Activated CD4-positive, alpha-beta T cell treated with anti-CD3 and anti-CD28 coated beads, Interleukin-2, amount 10 ng/mL, durations not matched to agents 24 days and 14 days (primary cell): ENCODE measurements at regions of chr3 and their contacts with region 1.

Region 1: DNA sequence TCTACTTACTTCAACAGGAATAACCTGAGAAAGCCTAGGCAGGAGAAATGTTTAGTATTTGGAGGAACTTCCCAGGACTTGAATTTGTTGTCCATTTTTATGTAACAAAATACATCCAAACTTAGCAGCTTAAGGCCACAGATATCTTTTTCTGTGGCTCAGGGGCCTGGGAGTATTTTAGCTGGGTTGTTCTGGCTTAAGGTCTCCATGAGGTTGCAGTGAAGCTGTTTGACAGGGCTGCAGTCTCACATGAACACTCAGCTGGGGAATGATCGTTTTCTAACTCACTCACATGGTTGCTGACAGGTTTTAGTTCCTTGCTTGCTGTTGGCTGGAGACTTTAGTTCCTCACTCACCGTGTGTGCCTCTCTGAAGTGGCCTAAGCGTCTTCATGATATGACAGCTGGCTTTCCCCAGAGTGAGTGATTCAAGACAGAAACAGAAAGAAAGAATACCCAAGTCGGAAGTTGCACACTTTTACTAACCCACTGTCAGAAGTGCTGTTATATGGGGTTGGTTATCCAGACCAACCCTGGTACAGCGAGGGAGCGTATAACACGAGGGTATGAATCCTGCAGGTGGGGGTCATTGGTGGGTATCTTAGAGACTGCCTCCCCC is 229.7 kb upstream of the TBL1XR1 start:
- DNase-seq: peak; percentile 88
- H3K4me3 Mint-ChIP-seq: peak overlapping the region; percentile 65
- H3K27ac Mint-ChIP-seq: peak overlapping the region; percentile 91
- H3K4me1 Mint-ChIP-seq: peaks cover 31% of the 10 kb centered on the region
- H3K27me3 Mint-ChIP-seq: peaks cover 9% of the 10 kb centered on the region

Region 2: DNA sequence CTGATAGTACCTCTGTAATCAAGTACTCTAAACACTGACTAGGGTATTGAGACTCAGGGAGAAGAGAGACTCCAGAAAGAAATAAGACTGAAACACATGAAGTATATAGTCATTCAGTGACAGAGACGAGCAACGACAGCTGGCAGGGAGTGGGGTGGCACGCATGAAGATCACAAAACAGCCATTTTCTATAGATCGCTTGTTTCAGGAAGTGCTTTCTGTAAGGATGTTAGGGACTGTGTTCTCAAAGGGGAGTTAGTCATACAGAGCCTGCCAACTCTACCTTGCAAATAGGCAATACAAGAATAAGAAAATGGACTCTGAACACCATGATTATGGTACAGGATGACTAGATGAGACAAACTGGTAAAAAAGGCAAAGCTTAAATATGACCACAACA is 369.2 kb before region 1 on chr3:
- intact Hi-C with region 1: loop called (anchors 1 kb)
- DNase-seq: peak; percentile 76
- H3K4me3 Mint-ChIP-seq: no peak overlapping the region
- H3K27ac Mint-ChIP-seq: no peak overlapping the region
- H3K4me1 Mint-ChIP-seq: peaks cover 19% of the 10 kb centered on the region
- H3K27me3 Mint-ChIP-seq: no peaks in the 10 kb centered on the region

Region 3: GRCh38 chr3:177150970-177151627 is 275.9 kb before region 1 on chr3:
- intact Hi-C with region 1: no loop called
- DNase-seq: no peak
- H3K4me3 Mint-ChIP-seq: peak overlapping the region; percentile 45
- H3K27ac Mint-ChIP-seq: peak overlapping the region; percentile 66
- H3K4me1 Mint-ChIP-seq: peaks cover 41% of the 10 kb centered on the region
- H3K27me3 Mint-ChIP-seq: no peaks in the 10 kb centered on the region

Region 4: DNA sequence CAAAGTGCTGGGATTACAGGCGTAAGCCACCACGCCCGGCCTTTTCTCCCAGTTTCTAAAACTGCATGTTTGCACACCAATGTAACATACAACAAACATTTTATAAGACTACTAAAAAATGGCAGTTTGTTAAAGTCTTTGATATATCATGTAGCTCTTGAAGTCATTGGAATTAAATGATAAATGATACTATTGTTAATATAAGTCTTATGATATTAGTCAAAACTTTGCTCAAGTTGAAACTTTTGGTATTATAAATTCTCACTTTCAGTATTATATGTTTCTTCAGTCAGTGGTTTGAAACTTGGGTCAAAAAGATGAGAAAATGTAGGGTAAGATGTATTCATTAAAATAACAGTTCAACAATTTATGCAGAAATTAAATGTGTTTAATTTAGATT is 112.1 kb before region 1 on chr3:
- intact Hi-C with region 1: loop called (anchors 1 kb)
- DNase-seq: no peak
- H3K4me3 Mint-ChIP-seq: no peak overlapping the region
- H3K27ac Mint-ChIP-seq: peak overlapping the region; percentile 60
- H3K4me1 Mint-ChIP-seq: peaks cover 14% of the 10 kb centered on the region
- H3K27me3 Mint-ChIP-seq: no peaks in the 10 kb centered on the region

Region 5: DNA sequence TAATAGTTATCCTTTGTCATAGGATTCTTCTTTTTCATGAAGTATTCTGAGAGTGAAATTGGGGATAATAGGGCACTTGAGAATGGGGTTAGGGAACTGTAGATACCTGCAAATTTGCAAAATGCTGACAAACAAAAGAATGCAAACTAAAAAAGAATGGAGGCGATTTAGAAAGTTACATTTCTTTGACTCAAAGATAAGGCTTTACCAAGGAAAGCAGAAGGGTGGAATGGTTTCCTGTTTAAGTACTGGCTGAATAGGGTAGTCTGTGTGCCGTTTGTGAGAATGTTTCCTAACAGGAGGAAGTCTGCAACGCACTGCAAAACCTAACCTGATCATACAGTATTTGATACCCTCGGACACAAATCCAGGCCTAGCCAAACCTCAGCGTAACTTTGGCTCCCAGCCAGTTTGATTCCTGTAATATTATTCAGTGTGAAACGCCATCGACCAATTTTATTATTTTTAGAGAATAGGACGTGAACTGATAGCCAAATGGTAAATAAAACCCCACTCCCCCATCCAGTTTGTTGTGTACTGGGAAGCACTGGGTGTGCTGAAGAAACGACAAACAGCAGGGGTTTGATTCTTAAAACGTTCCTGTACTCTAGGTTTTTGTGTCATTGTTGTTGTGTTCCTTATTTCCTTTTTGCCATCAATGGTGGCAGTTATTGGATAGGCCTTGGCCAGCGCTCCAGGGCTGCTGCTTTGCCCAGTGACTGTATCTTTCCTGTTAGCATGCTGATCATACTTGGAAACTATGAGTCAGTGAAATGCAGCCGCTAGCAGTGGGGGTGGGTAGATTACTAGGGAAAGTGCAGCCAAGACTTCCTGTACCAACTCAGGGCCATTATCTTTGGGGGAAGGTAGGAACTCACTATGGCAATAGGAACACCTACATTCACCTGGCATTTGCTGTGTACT is 81.7 kb before region 1 on chr3:
- intact Hi-C with region 1: loop called (anchors 1 kb)
- DNase-seq: peak; percentile 90
- H3K4me3 Mint-ChIP-seq: peak overlapping the region; percentile 47
- H3K27ac Mint-ChIP-seq: peak overlapping the region; percentile 97
- H3K4me1 Mint-ChIP-seq: peaks cover 35% of the 10 kb centered on the region
- H3K27me3 Mint-ChIP-seq: peaks cover 2% of the 10 kb centered on the region

Region 6: GRCh38 chr3:177624514-177625495 is 197.8 kb after region 1 on chr3:
- intact Hi-C with region 1: loop called (anchors 10 kb)
- DNase-seq: no peak
- H3K4me3 Mint-ChIP-seq: no peak overlapping the region
- H3K27ac Mint-ChIP-seq: no peak overlapping the region
- H3K4me1 Mint-ChIP-seq: peaks cover 10% of the 10 kb centered on the region
- H3K27me3 Mint-ChIP-seq: no peaks in the 10 kb centered on the region

Region 7: GRCh38 chr3:178001670-178002101 is 574.7 kb after region 1 on chr3:
- intact Hi-C with region 1: loop called (anchors 5 kb)
- DNase-seq: peak; percentile 77
- H3K4me3 Mint-ChIP-seq: peak overlapping the region; percentile 63
- H3K27ac Mint-ChIP-seq: peak overlapping the region; percentile 91
- H3K4me1 Mint-ChIP-seq: peaks cover 36% of the 10 kb centered on the region
- H3K27me3 Mint-ChIP-seq: no peaks in the 10 kb centered on the region